CD14-positive monocyte (primary cell): ENCODE measurements at regions of chr5 and their contacts with region 1.

Region 1: DNA sequence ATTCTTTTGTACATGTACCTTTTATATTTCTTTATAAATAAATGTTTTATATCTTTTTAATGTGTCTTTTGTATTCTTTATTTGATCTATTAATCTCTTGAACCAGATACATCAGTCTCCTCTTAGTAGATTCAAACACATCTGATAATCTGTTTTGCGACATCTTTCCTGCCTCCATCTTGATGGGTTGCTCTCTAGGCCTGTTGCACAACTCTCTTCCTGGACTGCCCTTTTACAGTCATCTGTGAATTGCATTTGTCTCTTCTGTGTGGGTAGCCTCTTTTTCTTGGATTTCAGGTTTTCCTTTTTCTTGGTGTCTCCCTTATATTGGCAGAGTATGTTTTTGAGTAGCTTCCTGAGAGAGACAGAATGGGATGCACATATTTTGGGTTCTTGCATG is 6.2 kb downstream of the ZFYVE16 start:
- DNase-seq: peak; percentile 50 to 82 (median 77)
- H3K4me3 ChIP-seq: no peak overlapping the region
- H3K4me3 Mint-ChIP-seq: no peak overlapping the region
- H3K27ac ChIP-seq: no peak overlapping the region
- H3K27ac Mint-ChIP-seq: peak overlapping the region in 6 of 7 donors; percentile 3 to 76 (median 12)
- H3K4me1 ChIP-seq: peaks cover 18 to 22% of the 10 kb centered on the region in 2 donors
- H3K4me1 Mint-ChIP-seq: peaks cover 32% of the 10 kb centered on the region
- H3K27me3 ChIP-seq: no peaks in the 10 kb centered on the region
- H3K27me3 Mint-ChIP-seq: peaks cover 0 to 2% (median 0%) of the 10 kb centered on the region in 3 donors
- CTCF ChIP-seq: no peak

Region 2: DNA sequence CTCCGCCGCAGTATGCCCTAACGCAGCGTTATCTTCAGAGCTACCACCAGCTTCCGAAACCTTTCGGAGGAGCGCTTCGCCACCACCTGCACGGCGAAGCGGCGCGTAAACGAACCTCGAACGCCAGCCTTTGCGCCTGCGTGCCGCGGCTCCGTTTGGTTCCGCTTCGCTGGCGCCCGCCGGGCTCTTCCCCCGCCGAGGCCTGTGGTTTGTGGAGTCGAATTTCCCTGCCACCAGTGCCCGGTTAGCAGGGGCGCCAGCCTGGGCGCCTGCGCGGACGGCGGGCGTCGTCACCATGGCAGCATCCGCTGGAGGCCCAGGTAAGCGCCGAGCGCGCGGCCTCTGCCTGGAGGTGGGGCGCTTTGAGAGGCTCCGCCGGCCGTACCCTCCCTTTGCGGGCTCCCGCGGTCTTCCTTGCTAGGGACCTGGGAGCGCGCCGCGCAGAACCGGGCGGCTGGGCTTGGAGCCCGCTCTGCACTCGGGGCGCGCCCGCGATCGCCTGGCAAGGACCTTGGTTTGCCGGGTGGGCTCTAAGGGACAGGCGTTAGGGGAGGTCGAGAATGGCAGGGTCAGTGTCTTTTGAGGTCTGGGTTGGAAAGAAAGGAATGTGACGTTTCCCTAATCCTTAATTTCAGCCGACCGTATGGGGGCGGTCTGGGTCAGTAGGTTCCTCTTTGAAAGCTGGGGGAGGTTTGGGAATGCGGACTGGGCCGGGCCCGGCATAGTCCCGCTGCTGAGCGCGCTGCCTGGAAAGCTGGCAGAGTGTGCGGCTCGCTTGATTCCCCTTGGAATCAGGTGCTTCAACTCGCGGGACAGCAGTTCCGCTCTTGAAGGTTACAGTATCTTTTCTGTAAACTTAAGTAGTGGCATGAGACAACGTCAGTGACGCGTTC is 74.0 kb after region 1 on chr5 and contains the start of gene FAM151B:
- intact Hi-C with region 1: loop called in 1 of 2 experiments (anchors 10 kb)
- DNase-seq: peak; percentile 75 to 80 (median 79)
- H3K4me3 ChIP-seq: peak within 1 kb of the TSS; percentile 56 to 98 (median 72)
- H3K4me3 Mint-ChIP-seq: peak within 1 kb of the TSS; percentile 97 to 98
- H3K27ac ChIP-seq: peak within 1 kb of the TSS; percentile 25 to 87
- H3K27ac Mint-ChIP-seq: peak within 1 kb of the TSS; percentile 83 to 95 (median 90)
- H3K4me1 ChIP-seq: peaks cover 14 to 28% of the 10 kb centered on the region in 2 donors
- H3K4me1 Mint-ChIP-seq: peaks cover 35% of the 10 kb centered on the region
- H3K27me3 ChIP-seq: no peaks in the 10 kb centered on the region
- H3K27me3 Mint-ChIP-seq: no peaks in the 10 kb centered on the region
- CTCF ChIP-seq: no peak
- polyA plus RNA-seq, gene FAM151B: 3.2 to 10.2 (median 4.5) TPM